A549 (cell line): ENCODE measurements at regions of chr5 and their contacts with region 1.

Region 1: DNA sequence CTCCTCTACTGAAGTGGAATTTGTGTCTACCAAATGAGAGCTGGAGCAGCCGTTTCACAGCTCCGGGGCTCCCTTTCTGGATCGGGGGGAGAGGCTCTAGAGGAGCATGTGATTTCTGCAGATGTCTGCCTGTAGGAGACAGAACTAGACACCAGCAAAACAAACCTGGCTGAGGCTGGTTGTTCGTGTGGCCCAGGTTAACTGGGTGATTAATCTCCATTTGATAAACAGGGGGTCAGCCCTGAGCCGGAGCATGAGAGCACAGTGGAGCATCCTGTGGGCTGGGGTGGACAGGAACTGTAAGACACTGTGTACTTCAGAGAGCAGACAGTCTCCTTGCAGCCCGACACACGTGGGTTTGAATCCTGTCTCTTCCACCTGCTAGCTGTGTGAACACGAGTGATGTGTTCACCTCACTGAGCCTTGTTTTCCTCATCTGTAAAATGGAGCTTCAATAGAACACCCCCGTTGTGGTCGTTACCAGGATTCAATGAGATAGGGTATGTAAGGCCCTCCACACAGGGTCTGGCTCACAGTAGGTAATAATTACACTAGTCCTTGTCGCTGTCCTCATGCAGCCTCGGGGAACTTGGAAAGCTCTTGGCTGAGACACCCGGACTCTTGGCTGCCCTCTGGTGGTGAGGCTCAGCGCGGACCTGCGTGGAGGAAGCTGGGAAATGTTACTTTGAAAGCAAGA is 12.9 kb downstream of the CXCL14 start:
- DNase-seq: peak; percentile 64 to 69
- ATAC-seq: peak; percentile 65 to 86; a peak in 5 of 6 replicates
- H3K4me3 ChIP-seq: no peak overlapping the region
- H3K27ac ChIP-seq: no peak overlapping the region
- H3K4me1 ChIP-seq: no peaks in the 10 kb centered on the region
- CTCF ChIP-seq: peak; percentile 85
- EP300 ChIP-seq: no peak
- POLR2A ChIP-seq: no peak
- RAD21 ChIP-seq: peak; percentile 53 to 57

Region 2: DNA sequence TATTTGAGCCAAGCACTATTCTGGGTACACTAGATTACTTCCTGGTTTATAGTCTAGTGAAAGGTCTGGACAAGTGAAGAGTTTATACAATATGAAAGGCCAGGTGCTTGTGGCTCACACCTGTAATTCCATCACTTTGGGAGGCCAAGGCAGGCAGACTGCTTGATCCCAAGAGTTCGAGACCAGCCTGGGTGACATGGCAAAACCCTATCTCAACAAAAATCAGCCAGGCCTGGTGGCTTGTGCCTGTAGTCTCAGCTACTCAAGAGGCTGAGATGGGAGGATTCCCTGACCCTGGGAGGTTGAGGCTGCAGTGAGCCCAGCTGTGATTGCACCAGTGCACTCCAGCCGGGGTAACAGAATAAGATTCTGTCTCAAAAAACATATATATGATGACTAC is 701.2 kb before region 1 on chr5:
- CTCF ChIA-PET with region 1: no interaction called
- POLR2A ChIA-PET with region 1: no interaction called
- DNase-seq: no peak
- ATAC-seq: peak in 1 of 2 experiments; percentile 23; a peak in 1 of 6 replicates
- H3K4me3 ChIP-seq: no peak overlapping the region
- H3K27ac ChIP-seq: no peak overlapping the region
- H3K4me1 ChIP-seq: no peaks in the 10 kb centered on the region
- CTCF ChIP-seq: no peak
- EP300 ChIP-seq: no peak
- POLR2A ChIP-seq: no peak
- RAD21 ChIP-seq: no peak

Region 3: DNA sequence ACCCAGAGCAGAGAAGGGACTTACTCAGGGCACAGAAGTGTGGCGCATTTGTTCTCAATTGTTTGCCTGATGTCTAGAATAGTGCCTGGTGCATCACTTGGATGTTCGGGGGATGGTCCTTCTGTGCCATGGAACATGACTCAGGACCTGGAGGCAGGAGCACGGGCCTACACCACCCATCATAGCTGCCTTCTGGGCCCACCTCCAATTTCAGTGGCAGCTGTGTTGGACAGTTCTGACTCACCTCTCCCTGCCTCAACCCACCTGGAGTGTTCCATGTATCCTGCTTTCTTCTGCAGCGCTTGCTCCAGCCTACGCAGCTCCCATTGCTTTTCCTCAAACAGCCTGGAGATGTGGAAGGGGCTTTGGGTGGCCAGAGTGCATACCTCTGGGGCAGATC is 25.4 kb after region 1 on chr5:
- CTCF ChIA-PET with region 1: interaction called, 22 read pairs
- POLR2A ChIA-PET with region 1: no interaction called
- DNase-seq: no peak
- ATAC-seq: no peak
- H3K4me3 ChIP-seq: no peak overlapping the region
- H3K27ac ChIP-seq: no peak overlapping the region
- H3K4me1 ChIP-seq: no peaks in the 10 kb centered on the region
- CTCF ChIP-seq: no peak
- EP300 ChIP-seq: no peak
- POLR2A ChIP-seq: no peak
- RAD21 ChIP-seq: no peak